Right cardiac atrium (tissue), 5 donors: ENCODE measurements at regions of chr11 and their contacts with region 1.

Region 1: GRCh38 chr11:78139422-78140391 is at the start of gene ALG8:
- DNase-seq: peak; percentile 96 to 99 (median 99)
- ATAC-seq: peak; percentile 99
- H3K4me3 ChIP-seq: peak within 1 kb of the TSS; percentile 88
- H3K27ac ChIP-seq: peak within 1 kb of the TSS; percentile 76
- H3K4me1 ChIP-seq: peaks cover 2% of the 10 kb centered on the region
- H3K27me3 ChIP-seq: no peaks in the 10 kb centered on the region
- total RNA-seq, gene ALG8: 13.2 to 26.0 (median 20.0) TPM

Region 2: GRCh38 chr11:78076733-78077403 is 62.8 kb before region 1 on chr11:
- intact Hi-C with region 1: loop called in 1 of 4 experiments (anchors 2 kb)
- DNase-seq: no peak
- ATAC-seq: no peak
- H3K4me3 ChIP-seq: no peak overlapping the region
- H3K27ac ChIP-seq: no peak overlapping the region
- H3K4me1 ChIP-seq: peaks cover 13% of the 10 kb centered on the region
- H3K27me3 ChIP-seq: no peaks in the 10 kb centered on the region

Region 3: DNA sequence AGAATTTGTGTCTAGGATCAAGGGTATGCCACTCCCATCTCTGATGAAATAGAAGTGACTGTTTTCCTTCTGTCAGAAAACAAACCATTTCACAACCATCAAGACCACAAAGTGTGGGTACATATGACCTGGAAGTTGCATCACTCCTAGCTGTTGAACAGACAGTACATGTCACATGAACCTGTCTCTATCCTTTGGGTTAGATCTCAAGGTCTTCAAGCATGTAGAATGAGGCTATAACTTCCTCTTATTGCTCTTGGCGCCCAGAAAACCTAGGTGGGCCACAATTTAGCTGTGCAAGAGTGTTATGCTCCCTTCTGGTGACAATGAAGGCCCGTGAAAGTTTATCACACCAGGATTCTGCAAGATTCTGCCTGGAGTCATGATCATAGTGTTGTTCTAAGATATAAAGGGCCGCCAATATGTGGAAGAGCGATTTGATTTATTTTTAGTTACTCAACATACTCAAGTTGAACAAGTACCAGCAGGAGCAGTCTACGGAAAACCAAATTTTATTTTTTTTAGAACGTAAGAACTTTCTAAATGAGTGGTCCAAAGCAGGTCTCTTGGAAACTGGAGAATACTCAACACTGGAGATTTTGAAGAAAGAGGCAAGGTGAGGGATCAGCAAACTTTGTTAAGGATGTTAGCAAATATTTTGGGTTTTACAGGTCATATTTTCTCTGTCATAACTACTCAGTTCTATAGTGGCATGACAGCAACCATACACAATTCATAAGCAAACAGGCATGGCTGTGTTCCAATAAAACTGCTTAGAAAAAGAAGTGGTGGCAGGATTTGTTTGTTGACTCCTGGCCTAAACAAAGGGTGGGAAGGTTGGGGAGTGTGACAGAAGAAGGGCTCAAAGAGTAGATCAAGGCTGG is 150.8 kb after region 1 on chr11:
- intact Hi-C with region 1: no loop called
- DNase-seq: no peak
- ATAC-seq: peak; percentile 71 to 72
- H3K4me3 ChIP-seq: no peak overlapping the region
- H3K27ac ChIP-seq: no peak overlapping the region
- H3K4me1 ChIP-seq: no peaks in the 10 kb centered on the region
- H3K27me3 ChIP-seq: no peaks in the 10 kb centered on the region

Region 4: GRCh38 chr11:78564490-78565467 is 425.1 kb after region 1 on chr11:
- intact Hi-C with region 1: loop called in 1 of 4 experiments (anchors 10 kb)
- DNase-seq: no peak
- ATAC-seq: peak; percentile 42 to 52
- H3K4me3 ChIP-seq: no peak overlapping the region
- H3K27ac ChIP-seq: no peak overlapping the region
- H3K4me1 ChIP-seq: no peaks in the 10 kb centered on the region
- H3K27me3 ChIP-seq: no peaks in the 10 kb centered on the region

Region 5: GRCh38 chr11:79963856-79964645 is 1824.3 kb after region 1 on chr11:
- intact Hi-C with region 1: no loop called
- DNase-seq: no peak
- ATAC-seq: no peak
- H3K4me3 ChIP-seq: no peak overlapping the region
- H3K27ac ChIP-seq: no peak overlapping the region
- H3K4me1 ChIP-seq: no peaks in the 10 kb centered on the region
- H3K27me3 ChIP-seq: no peaks in the 10 kb centered on the region